ENCODE measurements at regions of chr5 and their contacts with region 1.

Region 1: GRCh38 chr5:119332978-119333401 is 22.8 kb upstream of the TNFAIP8 start:
- DNase-seq: no peak
- ATAC-seq: no peak
- H3K4me3 ChIP-seq: no peak overlapping the region
- H3K27ac ChIP-seq: peak overlapping the region in 1 of 2 experiments; percentile 18; a peak in 1 of 6 replicates
- H3K4me1 ChIP-seq: peaks cover 45% of the 10 kb centered on the region
- CTCF ChIP-seq: no peak
- EP300 ChIP-seq: no peak
- POLR2A ChIP-seq: no peak
- RAD21 ChIP-seq: no peak

Region 2: DNA sequence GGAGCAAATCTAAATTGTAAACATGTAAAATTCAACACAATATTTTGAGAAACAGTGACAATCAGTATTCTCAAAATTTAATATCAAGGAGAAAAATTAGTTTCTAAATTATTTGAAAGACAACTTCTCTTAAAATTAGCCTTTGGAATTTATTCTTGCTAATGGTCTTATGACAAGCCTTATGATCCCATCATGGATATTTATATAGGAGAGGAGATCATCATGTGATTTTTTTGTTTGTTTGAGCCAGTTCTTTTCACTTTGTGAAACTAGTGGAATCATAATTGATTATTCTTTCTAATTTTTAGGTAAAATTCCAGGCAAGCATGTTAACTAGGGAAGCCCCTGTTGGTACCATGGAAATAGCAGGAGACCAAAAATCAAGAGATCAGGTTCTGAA is 237.4 kb before region 1 on chr5:
- CTCF ChIA-PET with region 1: no interaction called
- POLR2A ChIA-PET with region 1: no interaction called
- DNase-seq: no peak
- ATAC-seq: no peak
- H3K4me3 ChIP-seq: no peak overlapping the region
- H3K27ac ChIP-seq: no peak overlapping the region
- H3K4me1 ChIP-seq: no peaks in the 10 kb centered on the region
- CTCF ChIP-seq: no peak
- EP300 ChIP-seq: no peak
- POLR2A ChIP-seq: no peak
- RAD21 ChIP-seq: no peak

Region 3: GRCh38 chr5:119267958-119268386 is 65.0 kb before region 1 on chr5:
- CTCF ChIA-PET with region 1: interaction called, 12 read pairs
- POLR2A ChIA-PET with region 1: interaction called, 5 read pairs
- DNase-seq: peak; percentile 46 to 84
- ATAC-seq: peak; percentile 77 to 79
- H3K4me3 ChIP-seq: peak overlapping the region; percentile 69
- H3K27ac ChIP-seq: peak overlapping the region; percentile 86 to 93
- H3K4me1 ChIP-seq: peaks cover 34% of the 10 kb centered on the region
- CTCF ChIP-seq: no peak
- EP300 ChIP-seq: no peak
- POLR2A ChIP-seq: no peak
- RAD21 ChIP-seq: no peak

Region 4: GRCh38 chr5:119302916-119303897 is 29.8 kb before region 1 on chr5:
- CTCF ChIA-PET with region 1: interaction called, 22 read pairs
- POLR2A ChIA-PET with region 1: no interaction called
- DNase-seq: peak; percentile 65 to 93
- ATAC-seq: peak; percentile 94 to 96
- H3K4me3 ChIP-seq: peak overlapping the region; percentile 14
- H3K27ac ChIP-seq: peak overlapping the region; percentile 82 to 89
- H3K4me1 ChIP-seq: peaks cover 78% of the 10 kb centered on the region
- CTCF ChIP-seq: no peak
- EP300 ChIP-seq: peak; percentile 79 to 90; a peak in 4 of 5 replicates
- POLR2A ChIP-seq: no peak
- RAD21 ChIP-seq: peak; percentile 40 to 50

Region 5: DNA sequence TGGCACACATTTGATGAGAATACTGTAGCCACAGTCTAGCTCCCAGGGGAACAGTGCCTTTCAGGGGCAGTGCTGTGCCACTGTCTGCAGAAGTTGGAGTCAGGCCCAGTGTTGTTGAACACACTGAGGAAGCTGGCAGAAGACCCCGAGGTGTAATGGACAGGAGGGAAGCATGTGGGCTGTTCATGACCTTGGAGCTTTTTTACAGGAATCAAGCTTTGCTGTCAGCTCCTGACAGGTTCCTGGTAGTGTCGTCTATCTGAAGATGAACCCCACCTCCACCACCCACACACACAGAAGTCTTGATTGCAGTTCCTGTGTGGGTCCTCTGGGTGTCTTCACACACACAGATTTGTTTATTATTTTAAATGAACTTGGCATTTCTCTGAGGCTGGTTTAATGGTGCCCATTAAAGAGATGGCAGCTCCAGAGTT is 17.5 kb before region 1 on chr5:
- CTCF ChIA-PET with region 1: interaction called, 15 read pairs
- POLR2A ChIA-PET with region 1: no interaction called
- DNase-seq: peak; percentile 67 to 70
- ATAC-seq: peak; percentile 91 to 94
- H3K4me3 ChIP-seq: no peak overlapping the region
- H3K27ac ChIP-seq: peak overlapping the region; percentile 32 to 77; a peak in 4 of 6 replicates
- H3K4me1 ChIP-seq: peaks cover 32% of the 10 kb centered on the region
- CTCF ChIP-seq: peak; percentile 28; the same call in 2 of the 3 replicates
- EP300 ChIP-seq: no peak
- POLR2A ChIP-seq: no peak
- RAD21 ChIP-seq: peak; percentile 46 to 50; a peak in 2 of 5 replicates

Region 6: GRCh38 chr5:119355685-119356611 is 23.0 kb after region 1 on chr5 and contains the start of gene TNFAIP8:
- CTCF ChIA-PET with region 1: interaction called, 11 read pairs
- POLR2A ChIA-PET with region 1: interaction called, 4 read pairs
- DNase-seq: no peak
- ATAC-seq: no peak
- H3K4me3 ChIP-seq: no peak within 1 kb of the TSS
- H3K27ac ChIP-seq: no peak within 1 kb of the TSS
- H3K4me1 ChIP-seq: peaks cover 13% of the 10 kb centered on the region
- CTCF ChIP-seq: no peak
- EP300 ChIP-seq: no peak
- POLR2A ChIP-seq: no peak
- RAD21 ChIP-seq: no peak
- polyA plus RNA-seq, gene TNFAIP8: 30.3 and 35.7 TPM in 2 replicates

Region 7: DNA sequence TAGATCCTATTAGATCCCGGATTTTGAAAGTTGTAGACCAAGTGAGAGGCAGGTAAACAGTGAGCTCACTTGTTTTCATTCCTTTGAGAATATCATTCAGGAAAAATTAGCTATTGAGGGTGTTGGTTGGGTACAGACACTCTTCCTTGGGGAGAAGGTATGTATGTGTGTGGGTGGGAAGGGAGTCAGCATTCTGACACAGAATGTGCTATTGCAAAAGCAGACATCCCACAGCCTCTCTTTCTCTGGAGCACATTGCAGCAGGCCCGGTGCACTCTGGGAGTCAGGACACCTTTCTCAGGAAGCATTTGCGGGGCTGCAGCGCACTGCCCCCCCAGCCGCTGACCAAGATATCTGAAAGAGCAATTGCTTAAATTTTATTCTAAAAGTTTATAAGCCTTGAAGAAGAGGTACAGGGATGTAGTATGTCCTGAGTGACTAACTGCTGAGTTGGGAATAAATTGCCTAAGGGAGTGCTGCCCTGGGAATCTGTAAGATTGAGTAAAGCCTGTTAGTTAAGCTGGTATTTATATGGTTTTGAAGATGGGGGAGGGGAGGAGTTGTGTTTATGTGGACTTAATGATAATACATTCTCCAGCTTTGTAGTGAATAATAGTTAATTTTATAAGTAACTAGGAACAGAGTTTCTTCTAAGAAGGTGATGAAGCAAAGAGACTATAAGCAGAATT is 28.1 kb after region 1 on chr5:
- CTCF ChIA-PET with region 1: interaction called, 11 read pairs
- POLR2A ChIA-PET with region 1: interaction called, 4 read pairs
- DNase-seq: no peak
- ATAC-seq: no peak; a peak in 1 of 6 replicates
- H3K4me3 ChIP-seq: no peak overlapping the region
- H3K27ac ChIP-seq: no peak overlapping the region
- H3K4me1 ChIP-seq: peaks cover 22% of the 10 kb centered on the region
- CTCF ChIP-seq: no peak
- EP300 ChIP-seq: no peak
- POLR2A ChIP-seq: no peak
- RAD21 ChIP-seq: no peak

Measured in A549 (cell line).